Stomach (tissue), 19 donors: ENCODE measurements at regions of chr2 and their contacts with region 1.

Region 1: DNA sequence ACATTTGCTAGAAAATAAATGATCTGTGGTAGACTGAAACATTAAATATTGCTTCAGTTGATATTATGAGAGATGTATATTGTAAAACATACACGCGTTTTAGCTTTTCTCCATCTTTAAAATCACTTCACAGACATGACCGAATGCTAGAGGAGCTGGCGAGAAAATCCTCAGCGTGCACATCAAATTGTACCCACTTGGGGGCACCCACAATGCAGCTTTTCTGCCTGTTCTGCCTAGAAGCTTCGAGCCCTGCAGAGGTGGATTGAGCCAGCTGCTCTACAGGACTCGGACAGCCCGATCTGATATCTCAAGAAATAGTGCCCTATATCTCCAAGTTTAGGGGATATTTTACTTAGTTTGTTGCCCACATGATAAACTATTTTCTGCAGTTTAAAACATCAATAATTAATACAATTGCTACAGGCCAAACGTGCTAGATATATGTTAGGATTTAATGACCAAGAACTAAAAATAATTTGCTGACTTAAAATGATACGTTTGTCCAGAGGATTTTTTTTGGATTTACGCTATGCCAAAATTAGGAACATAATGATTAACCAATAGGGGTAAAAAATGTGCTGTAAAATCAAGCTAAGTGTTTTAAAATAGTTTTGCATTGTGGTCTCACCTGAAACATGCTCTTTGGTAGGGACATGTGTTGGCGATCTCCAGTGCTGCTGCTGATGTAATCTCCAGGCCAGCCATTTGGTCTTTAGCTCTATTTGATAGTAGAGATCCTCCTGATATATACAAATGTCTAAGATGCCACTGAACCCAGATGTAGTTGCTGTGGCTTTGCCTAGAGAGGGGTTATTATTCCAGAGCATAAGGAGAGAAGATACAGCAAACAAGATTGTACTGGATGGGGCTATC is 22.3 kb upstream of the ATP5MC3 start:
- DNase-seq: peak; percentile 59 to 74
- H3K4me3 ChIP-seq: no peak overlapping the region
- H3K27ac ChIP-seq: no peak overlapping the region
- H3K4me1 ChIP-seq: peaks cover 0 to 5% (median 0%) of the 10 kb centered on the region in 4 donors
- H3K27me3 ChIP-seq: peaks cover 0 to 10% (median 0%) of the 10 kb centered on the region in 3 donors
- CTCF ChIP-seq: peak in 5 of 7 experiments; percentile 34 to 45 (median 37)
- EP300 ChIP-seq: no peak
- POLR2A ChIP-seq: no peak

Region 2: DNA sequence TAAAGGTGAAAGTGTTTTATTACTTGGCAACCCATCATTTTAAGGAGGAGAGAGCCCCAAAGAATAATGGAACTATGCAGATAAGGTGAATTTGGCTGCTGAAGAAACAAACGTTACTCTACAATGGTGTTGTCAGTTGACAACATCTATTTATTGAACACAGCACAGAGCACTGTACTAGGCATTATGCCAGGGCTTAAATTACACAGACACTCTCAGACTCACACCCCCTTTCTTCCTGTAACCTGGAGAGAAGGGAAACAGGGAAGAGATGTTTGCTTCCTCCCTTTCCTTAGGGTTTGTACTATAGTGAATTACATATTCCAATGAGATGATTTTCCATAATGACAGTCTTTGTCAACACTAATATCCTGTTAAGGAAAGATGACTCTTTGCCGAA is 71.7 kb after region 1 on chr2:
- intact Hi-C with region 1: loop called (anchors 5 kb)
- DNase-seq: peak in 1 of 2 donors; percentile 30
- H3K4me3 ChIP-seq: no peak overlapping the region
- H3K27ac ChIP-seq: no peak overlapping the region
- H3K4me1 ChIP-seq: no peaks in the 10 kb centered on the region
- H3K27me3 ChIP-seq: no peaks in the 10 kb centered on the region
- CTCF ChIP-seq: no peak
- EP300 ChIP-seq: no peak
- POLR2A ChIP-seq: no peak